HCT116 (cell line): ENCODE measurements at regions of chr1 and their contacts with region 1.

Region 1: GRCh38 chr1:162145280-162145965 is 75.9 kb downstream of the NOS1AP start:
- DNase-seq: no peak
- ATAC-seq: peak; percentile 67
- H3K4me3 ChIP-seq: peak overlapping the region; percentile 15 to 25
- H3K27ac ChIP-seq: peak overlapping the region; percentile 87
- H3K4me1 ChIP-seq: peaks cover 72 to 77% of the 10 kb centered on the region in 2 experiments
- H3K27me3 ChIP-seq: no peaks in the 10 kb centered on the region
- CTCF ChIP-seq: no peak
- POLR2A ChIP-seq: no peak
- RAD21 ChIP-seq: no peak

Region 2: GRCh38 chr1:162069328-162070093 is 75.9 kb before region 1 on chr1 and contains the start of gene NOS1AP:
- CTCF ChIA-PET with region 1: no interaction called
- POLR2A ChIA-PET with region 1: interaction called, 10 read pairs
- RAD21 ChIA-PET with region 1: no interaction called
- intact Hi-C with region 1: no loop called
- DNase-seq: peak; percentile 35
- ATAC-seq: peak; percentile 93
- H3K4me3 ChIP-seq: peak within 1 kb of the TSS; percentile 54 to 68
- H3K27ac ChIP-seq: peak within 1 kb of the TSS; percentile 41; the same call in 1 of the 2 replicates
- H3K4me1 ChIP-seq: peaks cover 40 to 41% of the 10 kb centered on the region in 2 experiments
- H3K27me3 ChIP-seq: peaks cover 26% of the 10 kb centered on the region; the same call in 1 of the 2 replicates
- CTCF ChIP-seq: no peak
- POLR2A ChIP-seq: no peak
- RAD21 ChIP-seq: no peak
- total RNA-seq, gene NOS1AP: 5.3 TPM

Region 3: DNA sequence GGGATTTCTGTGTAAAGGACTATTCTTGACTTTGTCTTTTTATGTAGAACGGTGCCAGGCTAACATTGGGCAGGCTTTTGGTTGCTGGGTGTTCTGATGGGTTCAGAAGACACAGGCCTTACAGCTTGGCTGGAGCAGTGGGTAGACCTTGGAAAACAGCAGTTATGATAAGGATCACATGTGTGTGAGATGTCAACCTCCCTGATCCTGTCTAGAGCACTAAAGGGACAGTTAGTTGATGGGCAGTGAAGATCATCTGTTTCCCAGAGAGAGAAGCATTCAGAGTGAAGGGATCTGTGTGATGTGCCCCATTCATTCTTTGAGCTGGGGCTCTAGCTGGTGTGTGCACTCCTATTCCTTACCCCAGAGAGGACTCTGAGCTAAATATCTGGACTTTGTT is 12.0 kb after region 1 on chr1:
- CTCF ChIA-PET with region 1: no interaction called
- POLR2A ChIA-PET with region 1: interaction called, 11 read pairs
- RAD21 ChIA-PET with region 1: no interaction called
- intact Hi-C with region 1: no loop called
- DNase-seq: no peak
- ATAC-seq: no peak
- H3K4me3 ChIP-seq: no peak overlapping the region
- H3K27ac ChIP-seq: no peak overlapping the region
- H3K4me1 ChIP-seq: peaks cover 7 to 9% of the 10 kb centered on the region in 2 experiments; a peak in 3 of 4 replicates
- H3K27me3 ChIP-seq: no peaks in the 10 kb centered on the region
- CTCF ChIP-seq: no peak
- POLR2A ChIP-seq: no peak
- RAD21 ChIP-seq: no peak

Region 4: DNA sequence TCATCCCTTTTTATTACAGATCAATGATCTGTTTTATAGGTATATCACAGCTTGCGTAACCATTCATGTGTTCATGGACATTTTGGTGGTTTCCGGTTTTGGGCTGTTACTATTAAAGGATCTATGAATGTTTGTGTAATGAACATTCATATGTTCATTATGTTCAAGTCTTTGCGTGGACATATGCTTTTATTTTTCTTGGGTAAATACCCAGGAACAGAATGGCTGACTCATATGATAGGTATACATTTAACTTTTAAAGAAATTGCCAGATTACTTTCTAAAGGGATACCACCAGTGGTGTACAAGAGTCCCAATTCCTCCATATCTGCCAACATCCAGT is 157.6 kb after region 1 on chr1:
- CTCF ChIA-PET with region 1: no interaction called
- POLR2A ChIA-PET with region 1: no interaction called
- RAD21 ChIA-PET with region 1: no interaction called
- intact Hi-C with region 1: no loop called
- DNase-seq: no peak
- ATAC-seq: no peak
- H3K4me3 ChIP-seq: no peak overlapping the region
- H3K27ac ChIP-seq: no peak overlapping the region
- H3K4me1 ChIP-seq: peaks cover 0 to 5% of the 10 kb centered on the region in 2 experiments; a peak in 1 of 4 replicates
- H3K27me3 ChIP-seq: no peaks in the 10 kb centered on the region
- CTCF ChIP-seq: no peak
- POLR2A ChIP-seq: no peak
- RAD21 ChIP-seq: no peak